ENCODE measurements at regions of chr3 and their contacts with region 1.

Region 1: DNA sequence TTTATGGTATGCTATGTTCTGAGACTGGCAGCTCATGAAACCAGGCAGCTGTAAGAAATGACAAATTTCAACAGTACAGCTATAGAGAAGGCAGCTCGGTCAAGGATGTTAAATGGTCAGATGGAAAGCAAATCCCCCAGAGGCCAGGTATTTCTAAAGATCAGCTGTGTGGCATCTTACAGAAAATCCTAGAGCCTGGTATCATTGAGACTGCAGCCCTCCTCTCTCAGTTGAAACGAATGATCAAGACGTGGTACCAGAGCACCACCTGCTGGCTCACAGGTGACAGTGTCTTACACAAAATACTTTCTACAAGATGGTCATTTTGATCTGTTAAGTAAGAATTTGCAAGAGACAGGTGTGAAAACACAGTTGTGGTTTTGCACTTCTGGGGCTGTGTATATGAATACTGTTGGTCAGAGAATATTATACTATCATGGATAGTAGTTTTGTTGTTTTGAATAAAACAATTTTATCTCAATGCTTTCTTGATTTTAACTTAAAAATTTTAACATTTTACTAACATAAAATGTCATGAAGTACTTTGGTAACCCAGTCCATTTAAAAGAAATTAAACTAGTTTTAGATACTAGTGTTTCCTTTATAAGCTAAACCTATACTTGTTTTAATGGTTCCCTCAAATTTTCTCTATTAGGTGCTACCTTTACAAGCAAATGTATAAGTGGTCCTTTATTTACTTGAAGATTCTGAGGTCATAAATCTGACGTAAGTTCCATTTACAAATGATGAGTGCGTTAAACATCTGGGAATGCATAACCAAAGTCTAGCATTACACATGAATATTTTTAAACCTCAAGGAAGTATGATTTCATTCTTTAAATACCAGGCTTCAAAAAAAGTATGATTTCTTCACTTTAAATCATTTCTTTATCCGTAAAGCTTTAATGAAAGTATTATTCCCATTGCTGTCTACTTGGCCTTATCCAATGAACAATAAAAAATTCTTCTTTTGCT is 121.8 kb downstream of the PDZRN3 start:
- DNase-seq: peak; percentile 42 to 61
- ATAC-seq: peak; percentile 61 to 72
- H3K4me3 ChIP-seq: no peak overlapping the region
- H3K27ac ChIP-seq: peak overlapping the region; percentile 75 to 84 (median 76)
- H3K4me1 ChIP-seq: peaks cover 36 to 38% of the 10 kb centered on the region in 2 donors
- H3K27me3 ChIP-seq: no peaks in the 10 kb centered on the region
- CTCF ChIP-seq: peak; percentile 69 to 87 (median 82)
- POLR2A ChIP-seq: no peak

Region 2: GRCh38 chr3:73094951-73095350 is 407.9 kb before region 1 on chr3:
- in situ Hi-C with region 1: loop called (anchors 5 kb)
- intact Hi-C with region 1: no loop called
- DNase-seq: no peak
- ATAC-seq: no peak
- H3K4me3 ChIP-seq: no peak overlapping the region
- H3K27ac ChIP-seq: no peak overlapping the region
- H3K4me1 ChIP-seq: no peaks in the 10 kb centered on the region
- H3K27me3 ChIP-seq: no peaks in the 10 kb centered on the region
- CTCF ChIP-seq: no peak
- POLR2A ChIP-seq: no peak

Region 3: GRCh38 chr3:73451306-73451944 is 51.5 kb before region 1 on chr3:
- in situ Hi-C with region 1: loop called in 1 of 4 experiments (anchors 10 kb)
- intact Hi-C with region 1: loop called (anchors 2 kb)
- DNase-seq: peak in 1 of 2 donors; percentile 12
- ATAC-seq: peak; percentile 92 to 95
- H3K4me3 ChIP-seq: no peak overlapping the region
- H3K27ac ChIP-seq: peak overlapping the region in 3 of 4 donors; percentile 56 to 70 (median 70)
- H3K4me1 ChIP-seq: peaks cover 18 to 26% of the 10 kb centered on the region in 2 donors
- H3K27me3 ChIP-seq: no peaks in the 10 kb centered on the region
- CTCF ChIP-seq: no peak
- POLR2A ChIP-seq: no peak

Region 4: GRCh38 chr3:73813310-73814292 is 310.7 kb after region 1 on chr3:
- in situ Hi-C with region 1: loop called in 1 of 4 experiments (anchors 25 kb)
- intact Hi-C with region 1: no loop called
- DNase-seq: no peak
- ATAC-seq: no peak
- H3K4me3 ChIP-seq: no peak overlapping the region
- H3K27ac ChIP-seq: no peak overlapping the region
- H3K4me1 ChIP-seq: no peaks in the 10 kb centered on the region
- H3K27me3 ChIP-seq: no peaks in the 10 kb centered on the region
- CTCF ChIP-seq: no peak
- POLR2A ChIP-seq: no peak

Measured in gastrocnemius medialis (tissue), 4 donors.